ENCODE measurements at regions of chr20 and their contacts with region 1.

Region 1: GRCh38 chr20:36847009-36847709 is 28.8 kb upstream of the TLDC2 start:
- DNase-seq: peak; percentile 83
- ATAC-seq: peak; percentile 89

Region 2: GRCh38 chr20:37219751-37220668 is 372.9 kb after region 1 on chr20:
- intact Hi-C with region 1: loop called (anchors 5 kb)
- DNase-seq: no peak
- ATAC-seq: no peak

Measured in sciatic nerve (tissue), 2 donors.